ENCODE measurements at regions of chr11 and their contacts with region 1.

Region 1: DNA sequence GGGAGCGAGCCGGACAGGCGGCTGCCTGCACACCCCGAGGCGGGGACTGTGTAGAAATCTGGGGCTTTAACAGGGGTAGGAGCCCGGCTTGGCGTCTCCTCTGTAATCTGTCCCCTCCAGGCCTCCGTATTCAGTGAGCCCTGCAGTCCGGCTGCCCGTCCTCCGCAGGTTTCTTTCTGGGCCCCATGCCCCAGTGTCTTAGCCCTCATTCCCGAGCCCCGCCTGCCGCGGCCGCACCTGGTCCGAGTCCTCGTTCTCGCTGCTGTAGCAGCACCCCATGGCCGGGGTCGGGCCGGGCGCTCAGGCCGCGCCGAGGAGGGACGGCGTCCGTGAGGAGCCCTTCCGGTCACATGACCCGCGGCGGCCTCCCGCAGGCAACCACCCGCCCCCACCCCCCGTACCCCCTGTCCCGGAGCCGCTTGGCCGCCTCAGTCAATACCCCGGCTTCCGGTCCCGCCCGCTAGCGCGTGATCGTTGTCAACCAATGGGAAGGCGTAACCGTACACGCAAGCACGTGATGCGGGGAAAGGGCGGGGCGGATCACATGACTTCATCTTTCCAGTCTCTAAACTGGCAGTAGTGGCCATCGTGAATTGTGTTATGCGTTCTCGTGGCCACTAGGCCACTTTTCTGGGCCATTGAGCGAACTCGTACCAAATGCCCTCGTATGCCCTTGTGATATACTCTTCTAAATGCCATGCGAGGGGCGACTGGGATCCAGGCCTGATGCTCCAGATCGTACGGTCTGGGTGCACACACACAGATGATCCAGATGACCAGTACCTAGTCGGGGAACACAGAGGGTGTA is at the start of gene LAMTOR1:
- DNase-seq: peak; percentile 98
- ATAC-seq: peak; percentile 95
- H3K4me3 ChIP-seq: peak within 1 kb of the TSS; percentile 76 to 98 (median 84)
- H3K4me3 Mint-ChIP-seq: peak within 1 kb of the TSS; percentile 95
- H3K27ac ChIP-seq: peak within 1 kb of the TSS; percentile 94 to 96
- H3K27ac Mint-ChIP-seq: peak within 1 kb of the TSS; percentile 99
- H3K4me1 ChIP-seq: peaks cover 29 to 37% of the 10 kb centered on the region in 2 donors
- H3K4me1 Mint-ChIP-seq: peaks cover 41% of the 10 kb centered on the region
- H3K27me3 ChIP-seq: no peaks in the 10 kb centered on the region
- H3K27me3 Mint-ChIP-seq: no peaks in the 10 kb centered on the region
- CTCF ChIP-seq: peak; percentile 20
- total RNA-seq, gene LAMTOR1: 71.0 and 78.4 TPM in 2 replicates

Region 2: GRCh38 chr11:71152991-71153390 is 950.2 kb before region 1 on chr11:
- CTCF ChIA-PET with region 1: no interaction called
- POLR2A ChIA-PET with region 1: no interaction called
- intact Hi-C with region 1: no loop called
- DNase-seq: no peak
- ATAC-seq: no peak
- H3K4me3 ChIP-seq: no peak overlapping the region
- H3K4me3 Mint-ChIP-seq: no peak overlapping the region
- H3K27ac ChIP-seq: no peak overlapping the region
- H3K27ac Mint-ChIP-seq: no peak overlapping the region
- H3K4me1 ChIP-seq: no peaks in the 10 kb centered on the region
- H3K4me1 Mint-ChIP-seq: no peaks in the 10 kb centered on the region
- H3K27me3 ChIP-seq: peaks cover 0 to 12% (median 0%) of the 10 kb centered on the region in 4 experiments
- H3K27me3 Mint-ChIP-seq: peaks cover 40% of the 10 kb centered on the region
- CTCF ChIP-seq: no peak

Region 3: GRCh38 chr11:71787098-71787823 is 315.9 kb before region 1 on chr11:
- CTCF ChIA-PET with region 1: no interaction called
- POLR2A ChIA-PET with region 1: no interaction called
- intact Hi-C with region 1: loop called (anchors 2 kb)
- DNase-seq: peak; percentile 97
- ATAC-seq: peak; percentile 93
- H3K4me3 ChIP-seq: peak overlapping the region; percentile 11 to 93 (median 76)
- H3K4me3 Mint-ChIP-seq: peak overlapping the region; percentile 92
- H3K27ac ChIP-seq: peak overlapping the region; percentile 93 to 95
- H3K27ac Mint-ChIP-seq: peak overlapping the region; percentile 98
- H3K4me1 ChIP-seq: peaks cover 0 to 10% of the 10 kb centered on the region in 2 donors
- H3K4me1 Mint-ChIP-seq: peaks cover 15% of the 10 kb centered on the region
- H3K27me3 ChIP-seq: no peaks in the 10 kb centered on the region
- H3K27me3 Mint-ChIP-seq: no peaks in the 10 kb centered on the region
- CTCF ChIP-seq: no peak

Region 4: DNA sequence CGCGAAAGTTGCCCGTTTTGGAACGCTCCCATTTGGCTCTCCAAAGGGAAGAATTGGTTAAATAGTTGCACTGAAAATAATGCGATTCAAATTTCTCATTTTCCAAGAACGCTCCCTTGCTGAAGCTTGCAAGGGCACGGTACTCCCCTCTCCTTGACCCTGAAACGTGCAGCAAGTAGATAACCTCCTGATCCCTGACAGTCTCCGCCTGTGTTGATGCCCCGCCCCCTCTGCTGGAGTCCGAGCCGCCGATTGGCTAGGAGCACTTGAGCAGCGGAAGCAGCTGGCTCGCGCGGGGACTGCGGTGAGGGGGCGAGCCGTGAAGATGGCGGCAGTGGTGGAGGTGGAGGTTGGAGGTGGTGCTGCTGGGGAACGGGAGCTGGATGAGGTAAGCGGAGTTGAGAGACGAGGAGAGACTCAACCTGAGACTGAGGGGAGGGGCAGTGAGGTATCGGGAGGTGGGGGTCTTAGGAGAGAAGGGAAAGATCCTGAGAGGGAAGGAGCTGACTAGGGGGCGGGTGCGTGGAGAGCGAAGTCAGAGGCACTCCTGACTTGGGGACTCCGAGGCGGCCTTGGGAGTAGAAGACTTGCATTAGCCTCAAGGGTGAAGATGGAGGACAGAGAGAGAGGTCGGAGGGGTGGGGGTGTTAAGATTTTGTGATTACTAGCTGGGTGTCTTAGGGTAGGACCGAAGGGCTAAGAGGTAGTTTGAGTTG is 174.3 kb before region 1 on chr11 and contains the start of gene RNF121:
- CTCF ChIA-PET with region 1: interaction called, 3 read pairs
- POLR2A ChIA-PET with region 1: no interaction called
- intact Hi-C with region 1: loop called (anchors 1 kb)
- DNase-seq: peak; percentile 97
- ATAC-seq: peak; percentile 91
- H3K4me3 ChIP-seq: peak within 1 kb of the TSS; percentile 89 to 100 (median 99)
- H3K4me3 Mint-ChIP-seq: peak within 1 kb of the TSS; percentile 96
- H3K27ac ChIP-seq: peak within 1 kb of the TSS; percentile 92 to 93
- H3K27ac Mint-ChIP-seq: peak within 1 kb of the TSS; percentile 98
- H3K4me1 ChIP-seq: peaks cover 35 to 46% of the 10 kb centered on the region in 2 donors
- H3K4me1 Mint-ChIP-seq: peaks cover 59% of the 10 kb centered on the region
- H3K27me3 ChIP-seq: no peaks in the 10 kb centered on the region
- H3K27me3 Mint-ChIP-seq: no peaks in the 10 kb centered on the region
- CTCF ChIP-seq: no peak
- total RNA-seq, gene RNF121: 54.5 and 56.0 TPM in 2 replicates

Region 5: GRCh38 chr11:72080256-72080974 is 22.7 kb before region 1 on chr11 and contains the starts of genes LRRC51 and NUMA1:
- CTCF ChIA-PET with region 1: interaction called, 4 read pairs
- POLR2A ChIA-PET with region 1: no interaction called
- intact Hi-C with region 1: loop called (anchors 1 kb)
- DNase-seq: peak; percentile 100
- ATAC-seq: peak; percentile 90
- H3K4me3 ChIP-seq: peak within 1 kb of the TSS; percentile 61 to 84 (median 77)
- H3K4me3 Mint-ChIP-seq: peak within 1 kb of the TSS; percentile 87
- H3K27ac ChIP-seq: peak within 1 kb of the TSS; percentile 78 to 90
- H3K27ac Mint-ChIP-seq: peak within 1 kb of the TSS; percentile 87
- H3K4me1 ChIP-seq: peaks cover 15 to 23% of the 10 kb centered on the region in 2 donors
- H3K4me1 Mint-ChIP-seq: peaks cover 41% of the 10 kb centered on the region
- H3K27me3 ChIP-seq: no peaks in the 10 kb centered on the region
- H3K27me3 Mint-ChIP-seq: no peaks in the 10 kb centered on the region
- CTCF ChIP-seq: no peak
- total RNA-seq, gene LRRC51: 5.5 and 7.7 TPM in 2 replicates
- total RNA-seq, gene NUMA1: 297 and 300 TPM in 2 replicates

Region 6: GRCh38 chr11:72141066-72141465 is 37.9 kb after region 1 on chr11:
- CTCF ChIA-PET with region 1: interaction called, 8 read pairs
- POLR2A ChIA-PET with region 1: no interaction called
- intact Hi-C with region 1: loop called (anchors 5 kb)
- DNase-seq: no peak
- ATAC-seq: no peak
- H3K4me3 ChIP-seq: no peak overlapping the region
- H3K4me3 Mint-ChIP-seq: no peak overlapping the region
- H3K27ac ChIP-seq: no peak overlapping the region
- H3K27ac Mint-ChIP-seq: no peak overlapping the region
- H3K4me1 ChIP-seq: no peaks in the 10 kb centered on the region
- H3K4me1 Mint-ChIP-seq: no peaks in the 10 kb centered on the region
- H3K27me3 ChIP-seq: peaks cover 0 to 3% (median 0%) of the 10 kb centered on the region in 4 experiments
- H3K27me3 Mint-ChIP-seq: peaks cover 19% of the 10 kb centered on the region
- CTCF ChIP-seq: no peak